Activated naive CD4-positive, alpha-beta T cell treated with anti-CD3 and anti-CD28 coated beads for 36 hours (primary cell): ENCODE measurements at regions of chr16 and their contacts with region 1.

Region 1: GRCh38 chr16:56608043-56608875 is at the start of gene MT2A:
- DNase-seq: peak; percentile 94
- H3K4me3 Mint-ChIP-seq: peak within 1 kb of the TSS; percentile 88
- H3K27ac Mint-ChIP-seq: peak within 1 kb of the TSS; percentile 88
- H3K4me1 Mint-ChIP-seq: peaks cover 62% of the 10 kb centered on the region
- H3K27me3 Mint-ChIP-seq: no peaks in the 10 kb centered on the region
- total RNA-seq, gene MT2A: 95.7 to 130 TPM

Region 2: GRCh38 chr16:56203052-56203451 is 405.2 kb before region 1 on chr16:
- CTCF ChIA-PET with region 1: no interaction called
- intact Hi-C with region 1: loop called (anchors 5 kb)
- DNase-seq: peak; percentile 75
- H3K4me3 Mint-ChIP-seq: no peak overlapping the region
- H3K27ac Mint-ChIP-seq: no peak overlapping the region
- H3K4me1 Mint-ChIP-seq: peaks cover 21% of the 10 kb centered on the region
- H3K27me3 Mint-ChIP-seq: peaks cover 5% of the 10 kb centered on the region

Region 3: DNA sequence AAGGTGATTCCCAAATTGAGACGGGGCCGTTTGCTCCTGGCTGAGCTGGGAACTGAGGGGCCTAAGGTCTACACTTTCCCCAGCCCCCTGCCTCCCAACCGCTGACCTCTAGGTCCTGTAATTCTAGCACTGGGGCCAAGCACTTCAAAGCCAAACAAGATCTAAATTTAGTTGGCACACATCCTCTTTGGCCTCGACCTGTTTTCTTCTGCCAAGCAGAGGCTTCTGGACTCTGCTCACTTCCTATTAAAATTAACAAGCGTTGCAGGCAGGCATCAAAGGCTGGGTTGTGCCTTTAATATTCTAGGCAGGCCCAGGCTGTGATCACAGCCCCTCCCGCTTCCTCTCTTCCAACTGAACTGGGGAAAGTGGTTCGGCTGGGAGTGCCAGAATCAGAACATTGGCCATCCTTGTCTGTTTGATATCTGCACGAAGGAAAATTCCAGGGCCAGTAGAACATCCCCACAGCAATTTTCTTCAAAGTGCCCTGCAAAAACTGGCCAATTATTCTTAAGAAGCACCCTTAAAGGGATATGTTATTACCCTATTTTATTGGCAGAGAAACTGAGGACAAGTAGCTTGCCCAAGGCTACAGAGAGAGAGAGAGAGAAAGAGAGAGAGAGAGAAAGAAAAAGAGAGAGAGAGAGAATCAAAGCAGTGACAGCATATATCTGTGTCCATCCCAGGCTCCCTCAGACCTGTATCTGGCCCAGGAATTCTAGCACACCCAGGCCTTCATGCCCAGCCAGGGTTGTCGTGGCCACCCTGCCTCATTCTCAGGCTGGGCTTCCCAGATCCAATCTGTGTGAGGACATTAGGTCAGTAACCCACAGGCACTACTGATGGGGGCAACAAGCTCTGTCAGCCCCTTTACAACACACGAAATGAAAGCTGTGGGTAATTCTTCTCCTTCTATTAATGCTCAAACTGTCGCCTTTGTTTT is 56.2 kb before region 1 on chr16:
- CTCF ChIA-PET with region 1: no interaction called
- intact Hi-C with region 1: no loop called
- DNase-seq: no peak
- H3K4me3 Mint-ChIP-seq: no peak overlapping the region
- H3K27ac Mint-ChIP-seq: no peak overlapping the region
- H3K4me1 Mint-ChIP-seq: peaks cover 17% of the 10 kb centered on the region
- H3K27me3 Mint-ChIP-seq: peaks cover 2% of the 10 kb centered on the region

Region 4: GRCh38 chr16:56625140-56625942 is 17.1 kb after region 1 on chr16 and contains the start of gene MT1E:
- CTCF ChIA-PET with region 1: interaction called, 7 read pairs
- intact Hi-C with region 1: loop called (anchors 1 kb)
- DNase-seq: peak; percentile 61
- H3K4me3 Mint-ChIP-seq: peak within 1 kb of the TSS; percentile 76
- H3K27ac Mint-ChIP-seq: no peak within 1 kb of the TSS
- H3K4me1 Mint-ChIP-seq: peaks cover 14% of the 10 kb centered on the region
- H3K27me3 Mint-ChIP-seq: peaks cover 25% of the 10 kb centered on the region
- total RNA-seq, gene MT1E: 12.2 to 12.4 TPM

Region 5: DNA sequence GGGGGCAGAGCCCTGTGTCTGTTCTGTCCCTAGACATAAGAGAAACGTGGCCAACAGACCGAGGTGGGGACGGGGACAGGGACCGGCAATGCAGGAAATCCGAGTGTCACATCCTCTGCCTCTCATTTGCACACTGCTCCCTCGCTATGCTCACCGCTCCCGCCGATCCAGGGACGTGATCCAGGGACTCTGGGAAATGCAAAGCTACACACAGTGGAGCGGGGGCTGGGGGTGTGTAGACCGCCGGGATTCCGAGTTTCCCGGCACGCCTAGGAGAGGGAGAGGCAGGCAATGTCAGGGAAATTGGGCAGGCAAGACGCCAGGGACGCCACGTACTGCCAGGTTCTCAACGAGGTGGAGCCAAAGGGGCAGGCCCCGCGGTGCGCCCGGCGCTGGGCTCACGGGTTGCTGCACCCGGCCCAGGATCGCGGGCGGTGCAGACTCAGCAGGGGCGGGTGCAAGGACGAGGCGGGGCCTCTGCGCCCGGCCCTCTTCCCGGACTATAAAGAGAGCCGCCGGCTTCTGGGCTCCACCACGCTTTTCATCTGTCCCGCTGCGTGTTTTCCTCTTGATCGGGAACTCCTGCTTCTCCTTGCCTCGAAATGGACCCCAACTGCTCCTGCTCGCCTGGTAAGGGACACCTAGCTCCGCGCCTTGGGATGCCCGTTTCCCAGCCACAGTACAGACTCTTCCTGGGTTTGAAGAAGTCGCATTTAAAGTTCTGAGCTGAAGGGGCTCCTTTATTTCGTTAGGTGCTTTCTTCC is 73.9 kb after region 1 on chr16 and contains the start of gene MT1X:
- CTCF ChIA-PET with region 1: interaction called, 3 read pairs
- intact Hi-C with region 1: loop called (anchors 1 kb)
- DNase-seq: peak; percentile 95
- H3K4me3 Mint-ChIP-seq: peak within 1 kb of the TSS; percentile 92
- H3K27ac Mint-ChIP-seq: peak within 1 kb of the TSS; percentile 96
- H3K4me1 Mint-ChIP-seq: peaks cover 19% of the 10 kb centered on the region
- H3K27me3 Mint-ChIP-seq: no peaks in the 10 kb centered on the region
- total RNA-seq, gene MT1X: 49.9 to 57.9 TPM

Region 6: GRCh38 chr16:56931892-56932720 is 323.8 kb after region 1 on chr16 and contains the start of gene HERPUD1:
- CTCF ChIA-PET with region 1: no interaction called
- intact Hi-C with region 1: loop called (anchors 5 kb)
- DNase-seq: peak; percentile 99
- H3K4me3 Mint-ChIP-seq: peak within 1 kb of the TSS; percentile 98
- H3K27ac Mint-ChIP-seq: peak within 1 kb of the TSS; percentile 98
- H3K4me1 Mint-ChIP-seq: peaks cover 40% of the 10 kb centered on the region
- H3K27me3 Mint-ChIP-seq: no peaks in the 10 kb centered on the region
- total RNA-seq, gene HERPUD1: 118 to 120 TPM

Region 7: DNA sequence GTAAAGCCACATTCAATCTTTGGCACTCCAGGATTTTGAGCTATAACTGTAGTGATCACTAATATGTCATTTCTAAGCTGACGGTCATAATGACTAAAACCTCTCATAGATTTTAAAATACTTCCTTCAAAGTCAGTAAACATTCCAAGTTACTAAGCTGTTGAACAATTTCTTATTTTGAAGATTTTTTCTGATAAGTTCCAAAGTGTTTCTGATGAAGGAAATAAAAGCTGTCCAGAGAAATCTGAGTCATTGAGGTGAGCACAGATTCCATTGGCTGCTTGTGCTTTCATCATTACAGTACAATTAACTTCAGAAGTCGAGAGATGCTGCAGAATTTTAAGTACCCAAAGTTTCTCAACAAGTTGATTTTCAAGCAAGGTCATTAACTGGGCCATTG is 405.0 kb after region 1 on chr16:
- CTCF ChIA-PET with region 1: no interaction called
- intact Hi-C with region 1: loop called (anchors 2 kb)
- DNase-seq: no peak
- H3K4me3 Mint-ChIP-seq: no peak overlapping the region
- H3K27ac Mint-ChIP-seq: peak overlapping the region; percentile 97
- H3K4me1 Mint-ChIP-seq: peaks cover 85% of the 10 kb centered on the region
- H3K27me3 Mint-ChIP-seq: no peaks in the 10 kb centered on the region